A549 (cell line): ENCODE measurements at regions of chr12 and their contacts with region 1.

Region 1: GRCh38 chr12:103640410-103640809 is 53.3 kb downstream of the STAB2 start:
- DNase-seq: no peak
- ATAC-seq: no peak
- H3K4me3 ChIP-seq: no peak overlapping the region
- H3K27ac ChIP-seq: no peak overlapping the region
- H3K4me1 ChIP-seq: no peaks in the 10 kb centered on the region
- CTCF ChIP-seq: no peak
- EP300 ChIP-seq: no peak
- POLR2A ChIP-seq: no peak
- RAD21 ChIP-seq: no peak

Region 2: DNA sequence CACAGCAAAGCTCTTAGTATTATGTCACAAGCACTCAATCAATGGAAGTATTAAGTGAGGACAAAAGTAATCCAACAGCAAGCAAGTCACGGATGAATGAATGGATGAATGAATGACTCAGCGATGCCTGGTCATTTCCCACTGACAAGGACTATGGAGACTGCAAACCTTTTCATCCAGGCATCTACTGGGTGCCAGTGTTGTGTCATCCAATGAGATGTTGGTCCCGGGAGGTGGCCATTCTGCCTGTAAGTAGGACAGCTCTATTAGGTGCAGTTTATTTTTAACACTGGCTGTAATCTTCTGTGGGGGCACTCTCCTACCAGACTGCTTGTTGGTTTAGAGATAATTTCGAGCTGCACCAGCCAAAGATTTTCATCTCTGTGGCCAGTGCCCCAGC is 13.9 kb before region 1 on chr12:
- CTCF ChIA-PET with region 1: interaction called, 11 read pairs
- POLR2A ChIA-PET with region 1: no interaction called
- DNase-seq: peak; percentile 67 to 88
- ATAC-seq: peak; percentile 97
- H3K4me3 ChIP-seq: no peak overlapping the region
- H3K27ac ChIP-seq: peak overlapping the region in 1 of 2 experiments; percentile 44; a peak in 1 of 6 replicates
- H3K4me1 ChIP-seq: 0 out of 3 replicates have a peak, but pooled peaks cover 4% of the 10 kb centered on the region
- CTCF ChIP-seq: peak; percentile 78
- EP300 ChIP-seq: no peak
- POLR2A ChIP-seq: no peak
- RAD21 ChIP-seq: peak; percentile 89 to 91

Region 3: DNA sequence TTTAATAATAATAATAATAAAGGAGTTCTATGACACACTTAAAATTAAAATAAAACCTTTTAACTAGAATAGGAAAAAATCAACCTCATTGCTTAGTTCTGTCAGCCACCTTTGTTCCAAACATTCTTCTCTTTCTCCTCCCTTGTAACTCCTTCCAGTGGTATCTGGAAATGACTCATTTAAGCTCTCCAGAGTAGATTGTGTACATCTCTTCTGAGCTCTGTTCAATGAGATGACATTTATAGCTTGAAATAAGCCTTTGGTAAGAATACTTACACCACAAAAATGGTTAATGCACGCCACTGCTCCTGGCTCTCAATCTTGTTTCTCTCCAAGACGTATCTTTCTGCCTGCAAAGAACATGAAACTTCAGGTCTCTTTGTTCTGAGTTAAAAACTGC is 16.9 kb after region 1 on chr12:
- CTCF ChIA-PET with region 1: no interaction called
- POLR2A ChIA-PET with region 1: no interaction called
- DNase-seq: no peak
- ATAC-seq: peak in 1 of 2 experiments; percentile 30; a peak in 1 of 6 replicates
- H3K4me3 ChIP-seq: no peak overlapping the region
- H3K27ac ChIP-seq: no peak overlapping the region
- H3K4me1 ChIP-seq: no peaks in the 10 kb centered on the region
- CTCF ChIP-seq: no peak
- EP300 ChIP-seq: no peak
- POLR2A ChIP-seq: no peak
- RAD21 ChIP-seq: no peak